Ovary (tissue), 10 donors: ENCODE measurements at regions of chr10 and their contacts with region 1.

Region 1: GRCh38 chr10:122461367-122461728 is at the start of gene HTRA1:
- DNase-seq: peak; percentile 82 to 88 (median 86)
- H3K4me3 ChIP-seq: peak within 1 kb of the TSS; percentile 57
- H3K27ac ChIP-seq: peak within 1 kb of the TSS; percentile 90 to 91
- H3K4me1 ChIP-seq: peaks cover 28% of the 10 kb centered on the region
- H3K27me3 ChIP-seq: no peaks in the 10 kb centered on the region
- CTCF ChIP-seq: no peak
- EP300 ChIP-seq: no peak
- POLR2A ChIP-seq: no peak
- total RNA-seq, gene HTRA1: 194 to 463 (median 337) TPM

Region 2: DNA sequence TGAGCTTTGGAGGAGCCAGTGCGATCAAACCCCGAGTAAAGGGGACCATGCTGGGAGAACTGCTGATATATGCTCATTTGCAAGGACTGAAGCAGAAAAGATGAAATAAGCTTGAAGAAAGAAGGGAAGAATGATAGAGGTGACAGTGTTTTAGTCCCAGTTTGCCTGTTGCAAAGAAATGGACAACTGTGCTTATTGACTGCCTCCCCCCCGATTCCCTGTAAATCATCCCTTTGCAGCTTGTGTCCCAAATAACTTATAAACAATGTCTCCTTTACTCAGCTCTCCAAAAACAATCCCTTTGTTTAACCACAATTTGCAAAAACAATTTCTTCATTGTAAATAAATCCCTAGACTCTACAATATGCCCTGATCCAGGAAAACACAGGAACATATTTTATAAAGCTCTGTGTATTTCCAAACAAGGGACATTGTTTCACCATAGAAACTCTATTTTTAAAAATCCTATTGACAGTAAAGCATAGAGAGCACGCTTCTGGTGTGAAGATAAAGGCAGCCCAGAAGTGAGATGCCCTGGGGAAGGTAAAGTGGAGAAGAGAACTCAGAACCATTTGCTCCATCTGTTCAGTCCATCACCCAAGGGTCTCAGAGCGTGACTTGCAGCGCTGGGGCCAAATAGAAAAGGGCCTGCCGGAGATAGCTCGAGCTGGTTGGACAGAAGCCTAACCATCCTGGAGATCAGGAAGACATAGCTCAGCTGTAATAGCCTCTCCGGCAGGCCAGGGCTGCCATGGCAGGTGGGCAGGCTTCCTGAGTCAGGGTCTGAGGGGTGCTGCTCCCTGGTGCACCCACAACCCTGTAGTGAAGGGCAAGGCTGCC is 1329.7 kb before region 1 on chr10:
- intact Hi-C with region 1: no loop called
- DNase-seq: no peak
- H3K4me3 ChIP-seq: no peak overlapping the region
- H3K27ac ChIP-seq: no peak overlapping the region
- H3K4me1 ChIP-seq: peaks cover 3% of the 10 kb centered on the region
- H3K27me3 ChIP-seq: no peaks in the 10 kb centered on the region
- CTCF ChIP-seq: no peak
- EP300 ChIP-seq: no peak
- POLR2A ChIP-seq: no peak

Region 3: DNA sequence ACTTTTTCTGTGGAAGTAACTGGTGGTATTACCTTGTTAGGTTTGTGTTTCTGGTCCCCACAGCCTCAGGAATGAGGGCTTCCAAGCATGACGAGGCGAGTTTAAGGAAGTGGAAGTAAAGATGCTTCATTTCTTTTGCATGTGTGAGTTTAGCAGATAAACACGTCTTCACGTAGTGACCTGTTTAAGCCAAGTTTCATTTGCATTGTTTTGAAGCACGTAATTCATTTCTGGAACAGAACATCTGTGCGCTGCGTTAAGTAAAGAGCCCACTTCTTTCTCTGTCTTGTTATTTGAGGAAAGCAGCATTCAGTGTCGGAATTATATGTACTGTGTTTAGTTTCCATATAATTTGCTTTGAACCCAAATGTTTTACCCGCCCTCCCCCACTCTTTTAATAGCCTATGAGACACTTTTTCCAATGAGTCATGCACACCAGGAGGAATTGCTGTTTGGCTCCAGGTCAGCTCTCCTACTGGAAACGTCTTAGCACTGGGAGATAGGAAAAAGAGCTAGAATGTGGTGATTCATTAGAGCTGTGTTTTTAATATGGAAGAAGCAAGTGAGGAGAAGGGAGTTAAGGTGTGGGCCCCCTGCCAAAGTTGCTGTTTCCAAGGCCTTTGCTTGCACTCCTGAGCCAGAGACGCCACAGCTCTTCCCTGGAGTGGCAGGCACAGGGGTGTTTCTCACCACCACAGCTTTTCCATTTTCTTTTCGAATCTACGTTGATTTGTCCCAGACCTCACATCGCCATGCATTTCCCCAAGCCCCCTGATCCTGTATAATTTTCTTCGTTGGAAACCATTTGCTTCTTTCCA is 153.5 kb before region 1 on chr10:
- intact Hi-C with region 1: no loop called
- DNase-seq: peak; percentile 90 to 95 (median 93)
- H3K4me3 ChIP-seq: peak overlapping the region; percentile 2
- H3K27ac ChIP-seq: peak overlapping the region; percentile 74 to 87
- H3K4me1 ChIP-seq: peaks cover 16% of the 10 kb centered on the region
- H3K27me3 ChIP-seq: no peaks in the 10 kb centered on the region
- CTCF ChIP-seq: no peak
- EP300 ChIP-seq: peak; percentile 90
- POLR2A ChIP-seq: no peak

Region 4: GRCh38 chr10:122495406-122496340 is 34.3 kb after region 1 on chr10:
- intact Hi-C with region 1: loop called in 2 of 4 experiments (anchors 5 kb)
- DNase-seq: peak in 1 of 5 donors; percentile 44
- H3K4me3 ChIP-seq: no peak overlapping the region
- H3K27ac ChIP-seq: peak overlapping the region in 1 of 2 donors; percentile 5
- H3K4me1 ChIP-seq: peaks cover 27% of the 10 kb centered on the region
- H3K27me3 ChIP-seq: no peaks in the 10 kb centered on the region
- CTCF ChIP-seq: no peak
- EP300 ChIP-seq: no peak
- POLR2A ChIP-seq: no peak

Region 5: GRCh38 chr10:122507616-122508015 is 46.3 kb after region 1 on chr10:
- intact Hi-C with region 1: loop called in 1 of 4 experiments (anchors 2 kb)
- DNase-seq: no peak
- H3K4me3 ChIP-seq: no peak overlapping the region
- H3K27ac ChIP-seq: no peak overlapping the region
- H3K4me1 ChIP-seq: peaks cover 12% of the 10 kb centered on the region
- H3K27me3 ChIP-seq: no peaks in the 10 kb centered on the region
- CTCF ChIP-seq: no peak
- EP300 ChIP-seq: no peak
- POLR2A ChIP-seq: no peak

Region 6: DNA sequence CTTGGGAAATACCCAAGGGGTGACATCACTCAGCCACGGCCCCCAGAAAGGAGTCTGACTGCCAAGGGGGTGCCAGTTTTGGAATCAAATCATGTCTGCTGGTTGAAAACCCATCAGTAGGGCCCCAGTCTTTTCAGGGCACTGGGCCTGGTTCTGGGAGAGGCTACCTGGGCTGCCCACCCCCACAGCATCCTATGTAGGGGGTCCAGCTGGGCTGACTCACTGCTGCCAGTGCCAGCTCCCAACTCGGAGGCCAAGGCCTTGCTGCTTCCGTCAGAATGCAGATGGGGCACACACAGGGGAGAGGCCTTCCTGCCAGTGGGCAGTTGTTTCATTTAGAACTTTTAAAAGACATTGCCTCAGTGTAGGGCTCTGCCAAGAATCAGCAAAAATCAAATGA is 59.7 kb after region 1 on chr10:
- intact Hi-C with region 1: no loop called
- DNase-seq: no peak
- H3K4me3 ChIP-seq: no peak overlapping the region
- H3K27ac ChIP-seq: no peak overlapping the region
- H3K4me1 ChIP-seq: no peaks in the 10 kb centered on the region
- H3K27me3 ChIP-seq: no peaks in the 10 kb centered on the region
- CTCF ChIP-seq: no peak
- EP300 ChIP-seq: no peak
- POLR2A ChIP-seq: no peak